Activated T-helper 1 cell treated with anti-CD3 and anti-CD28 coated beads, Interleukin-12 subunit alpha, Interleukin-12 subunit beta, Interleukin-2, Interleukin-4 antibody, amounts not matched to agents 30 ng/mL and 10 ng/mL and 1 ng/mL, durations not matched to agents 14 hours and 24 hours and 36 hours (primary cell): ENCODE measurements at regions of chr2 and their contacts with region 1.

Region 1: DNA sequence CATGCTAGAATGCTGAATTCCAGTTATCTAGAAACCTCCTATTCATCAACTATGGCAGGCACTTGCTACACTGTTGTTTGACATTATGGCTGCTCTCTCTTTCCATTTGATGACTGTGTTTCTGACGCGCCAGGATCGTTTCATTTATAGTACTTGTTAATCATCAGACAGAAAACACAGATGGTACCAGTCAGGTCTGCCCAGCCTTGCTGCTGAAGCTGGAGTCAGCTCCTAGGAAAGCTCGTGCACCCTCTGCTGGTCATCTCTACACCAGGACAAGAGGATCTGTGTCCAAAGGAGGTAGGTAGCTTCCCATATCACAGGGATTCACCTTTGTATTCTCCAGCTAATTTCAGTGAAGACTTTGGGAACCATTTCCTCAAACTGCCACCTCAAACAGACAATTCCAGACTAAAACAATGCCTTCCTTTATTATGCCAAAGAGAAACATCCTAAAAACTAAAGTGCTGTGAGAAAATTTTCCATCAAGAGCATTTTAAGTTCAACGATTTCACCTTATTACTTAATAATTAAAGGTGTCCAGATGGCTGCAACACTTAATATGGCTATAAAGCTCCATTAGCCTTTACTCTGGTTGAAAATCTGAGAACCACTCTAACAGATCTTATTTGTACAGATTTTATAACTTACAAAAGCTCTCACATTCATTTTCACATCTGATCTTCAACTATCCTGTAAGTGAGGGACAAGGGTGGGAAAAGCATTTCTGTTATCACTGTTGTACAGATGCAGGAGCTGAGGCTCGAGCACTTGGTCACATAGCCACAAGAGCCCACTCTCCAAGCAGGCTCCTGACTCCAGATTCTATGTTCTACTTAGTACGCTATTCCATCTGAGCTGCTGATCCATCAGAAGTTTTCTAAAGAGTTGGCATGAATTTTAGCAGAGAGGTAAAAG is 17.5 kb downstream of the METTL8 start:
- DNase-seq: peak; percentile 65
- H3K4me3 Mint-ChIP-seq: no peak overlapping the region
- H3K27ac Mint-ChIP-seq: peak overlapping the region; percentile 78
- H3K4me1 Mint-ChIP-seq: peaks cover 33% of the 10 kb centered on the region
- H3K27me3 Mint-ChIP-seq: no peaks in the 10 kb centered on the region

Region 2: DNA sequence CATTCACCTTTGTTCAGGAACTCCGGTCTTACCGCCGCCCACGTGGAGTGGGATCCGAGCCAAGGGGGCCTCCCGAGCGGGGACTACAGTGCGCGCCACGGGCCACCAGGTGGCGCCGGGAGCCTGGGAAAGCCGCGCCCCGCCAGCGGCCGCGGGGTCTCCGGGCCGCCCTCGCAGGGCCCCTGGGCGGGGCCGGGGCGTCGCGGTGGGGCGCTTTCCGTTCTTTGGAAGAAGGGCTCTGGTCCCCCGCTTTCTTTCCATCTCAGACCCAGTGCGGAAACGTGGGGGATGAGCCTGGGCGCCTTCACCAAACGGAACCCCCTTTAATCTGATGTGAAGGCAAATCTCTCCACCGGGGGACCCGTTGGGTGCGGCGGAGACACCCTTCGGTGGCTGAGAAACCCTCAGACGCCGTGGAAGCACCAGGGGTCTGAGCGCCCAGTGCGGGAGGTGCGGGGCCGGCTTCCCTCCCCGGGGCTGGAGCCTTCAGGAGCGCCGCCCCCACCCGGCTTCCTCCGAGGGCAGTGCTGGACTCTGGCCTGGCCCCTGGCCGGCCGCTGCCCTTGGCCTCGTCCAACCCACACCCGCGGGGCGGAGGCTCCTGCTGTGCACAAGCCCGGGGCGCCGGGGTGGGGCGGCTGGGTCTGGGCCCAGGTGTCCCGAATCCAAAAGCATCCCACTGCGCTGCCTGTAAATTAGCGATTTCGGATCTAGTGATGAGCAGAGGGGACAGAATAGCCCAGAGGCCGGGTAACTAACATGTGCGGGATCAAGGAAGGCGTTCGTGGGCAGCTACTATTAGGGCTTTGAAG is 442.6 kb before region 1 on chr2:
- intact Hi-C with region 1: loop called (anchors 1 kb)
- DNase-seq: peak; percentile 77
- H3K4me3 Mint-ChIP-seq: peak overlapping the region; percentile 73
- H3K27ac Mint-ChIP-seq: no peak overlapping the region
- H3K4me1 Mint-ChIP-seq: peaks cover 16% of the 10 kb centered on the region
- H3K27me3 Mint-ChIP-seq: no peaks in the 10 kb centered on the region

Region 3: GRCh38 chr2:171086352-171087290 is 329.6 kb before region 1 on chr2:
- intact Hi-C with region 1: loop called (anchors 1 kb)
- DNase-seq: peak; percentile 23
- H3K4me3 Mint-ChIP-seq: peak overlapping the region; percentile 77
- H3K27ac Mint-ChIP-seq: peak overlapping the region; percentile 82
- H3K4me1 Mint-ChIP-seq: peaks cover 52% of the 10 kb centered on the region
- H3K27me3 Mint-ChIP-seq: no peaks in the 10 kb centered on the region

Region 4: GRCh38 chr2:171136024-171136423 is 280.2 kb before region 1 on chr2:
- intact Hi-C with region 1: loop called (anchors 1 kb)
- DNase-seq: no peak
- H3K4me3 Mint-ChIP-seq: no peak overlapping the region
- H3K27ac Mint-ChIP-seq: peak overlapping the region; percentile 84
- H3K4me1 Mint-ChIP-seq: peaks cover 20% of the 10 kb centered on the region
- H3K27me3 Mint-ChIP-seq: no peaks in the 10 kb centered on the region

Region 5: GRCh38 chr2:171244970-171245782 is 171.1 kb before region 1 on chr2:
- intact Hi-C with region 1: loop called (anchors 5 kb)
- DNase-seq: no peak
- H3K4me3 Mint-ChIP-seq: no peak overlapping the region
- H3K27ac Mint-ChIP-seq: no peak overlapping the region
- H3K4me1 Mint-ChIP-seq: peaks cover 47% of the 10 kb centered on the region
- H3K27me3 Mint-ChIP-seq: no peaks in the 10 kb centered on the region

Region 6: GRCh38 chr2:171260471-171261424 is 155.5 kb before region 1 on chr2:
- intact Hi-C with region 1: loop called (anchors 1 kb)
- DNase-seq: no peak
- H3K4me3 Mint-ChIP-seq: no peak overlapping the region
- H3K27ac Mint-ChIP-seq: peak overlapping the region; percentile 83
- H3K4me1 Mint-ChIP-seq: peaks cover 31% of the 10 kb centered on the region
- H3K27me3 Mint-ChIP-seq: no peaks in the 10 kb centered on the region

Region 7: GRCh38 chr2:171367692-171368091 is 48.6 kb before region 1 on chr2:
- intact Hi-C with region 1: no loop called
- DNase-seq: no peak
- H3K4me3 Mint-ChIP-seq: no peak overlapping the region
- H3K27ac Mint-ChIP-seq: no peak overlapping the region
- H3K4me1 Mint-ChIP-seq: no peaks in the 10 kb centered on the region
- H3K27me3 Mint-ChIP-seq: no peaks in the 10 kb centered on the region

Region 8: GRCh38 chr2:171893824-171894611 is 477.8 kb after region 1 on chr2 and contains the start of gene SLC25A12:
- intact Hi-C with region 1: no loop called
- DNase-seq: peak; percentile 71
- H3K4me3 Mint-ChIP-seq: peak within 1 kb of the TSS; percentile 98
- H3K27ac Mint-ChIP-seq: peak within 1 kb of the TSS; percentile 90
- H3K4me1 Mint-ChIP-seq: peaks cover 57% of the 10 kb centered on the region
- H3K27me3 Mint-ChIP-seq: peaks cover 7% of the 10 kb centered on the region
- total RNA-seq, gene SLC25A12: 34.6 and 35.0 TPM in 2 replicates